Activated naive CD4-positive, alpha-beta T cell treated with anti-CD3 and anti-CD28 coated beads for 36 hours (primary cell): ENCODE measurements at regions of chr10 and their contacts with region 1.

Region 1: GRCh38 chr10:6445501-6446316 is 134.4 kb downstream of the PRKCQ start:
- DNase-seq: peak; percentile 80
- H3K4me3 Mint-ChIP-seq: no peak overlapping the region
- H3K27ac Mint-ChIP-seq: no peak overlapping the region
- H3K4me1 Mint-ChIP-seq: peaks cover 37% of the 10 kb centered on the region
- H3K27me3 Mint-ChIP-seq: no peaks in the 10 kb centered on the region

Region 2: DNA sequence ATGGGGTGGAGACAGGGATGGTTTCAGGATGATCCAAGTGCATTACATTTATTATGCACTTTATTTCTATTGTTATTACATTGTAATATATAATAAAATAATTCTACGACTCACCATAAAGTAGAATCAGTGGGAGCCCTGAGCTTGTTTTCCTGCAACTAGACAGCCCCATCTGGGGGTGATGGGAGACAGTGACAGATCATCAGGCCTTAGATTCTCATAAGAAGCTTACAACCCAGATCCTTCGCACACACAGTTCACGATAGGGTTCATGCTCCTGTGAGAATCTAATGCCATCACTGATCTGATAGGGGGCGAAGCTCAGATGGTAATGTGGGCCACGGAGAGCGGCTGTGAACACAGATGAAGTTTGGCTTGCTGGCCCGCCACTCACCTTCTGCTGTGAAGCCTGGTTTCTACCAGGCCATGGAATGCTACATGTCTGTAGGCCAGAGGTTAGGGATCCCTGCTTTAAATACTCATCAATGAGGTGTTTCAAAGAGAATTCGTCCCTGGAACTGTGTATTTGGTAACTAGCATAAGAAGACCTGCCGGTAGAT is 155.6 kb after region 1 on chr10:
- CTCF ChIA-PET with region 1: interaction called, 3 read pairs
- intact Hi-C with region 1: loop called (anchors 1 kb)
- DNase-seq: peak; percentile 66
- H3K4me3 Mint-ChIP-seq: peak overlapping the region; percentile 51
- H3K27ac Mint-ChIP-seq: peak overlapping the region; percentile 88
- H3K4me1 Mint-ChIP-seq: peaks cover 71% of the 10 kb centered on the region
- H3K27me3 Mint-ChIP-seq: no peaks in the 10 kb centered on the region

Region 3: DNA sequence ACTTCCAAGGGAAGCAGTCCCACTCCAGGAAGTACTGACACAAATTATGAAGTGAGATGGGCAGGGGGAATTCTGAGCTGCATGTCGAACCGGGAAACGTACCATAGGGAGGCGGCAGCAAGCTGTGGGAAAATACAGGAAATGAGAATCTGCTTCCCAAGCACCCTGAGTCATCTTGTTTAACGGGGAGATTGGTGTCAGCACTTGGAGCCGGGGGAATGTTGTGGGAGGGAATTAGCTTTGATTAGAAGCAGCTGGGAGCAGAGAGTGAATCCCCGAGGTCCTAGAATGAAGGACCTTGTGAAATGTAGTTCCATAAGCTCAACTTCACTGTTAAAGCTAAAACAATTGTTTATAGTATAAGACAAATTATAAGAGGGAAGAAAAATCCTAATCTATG is 275.8 kb after region 1 on chr10:
- CTCF ChIA-PET with region 1: no interaction called
- intact Hi-C with region 1: no loop called
- DNase-seq: no peak
- H3K4me3 Mint-ChIP-seq: no peak overlapping the region
- H3K27ac Mint-ChIP-seq: no peak overlapping the region
- H3K4me1 Mint-ChIP-seq: no peaks in the 10 kb centered on the region
- H3K27me3 Mint-ChIP-seq: peaks cover 20% of the 10 kb centered on the region